Pancreas (tissue), 10 donors: ENCODE measurements at regions of chr19 and their contacts with region 1.

Region 1: GRCh38 chr19:38618590-38619360 is at the start of gene EIF3K:
- DNase-seq: peak; percentile 97 to 100 (median 99)
- ATAC-seq: peak; percentile 94 to 99 (median 97)
- H3K4me3 ChIP-seq: peak within 1 kb of the TSS; percentile 53 to 94 (median 66)
- H3K27ac ChIP-seq: peak within 1 kb of the TSS; percentile 27 to 60 (median 44)
- H3K4me1 ChIP-seq: peaks cover 6 to 10% (median 7%) of the 10 kb centered on the region in 3 donors
- H3K27me3 ChIP-seq: no peaks in the 10 kb centered on the region
- CTCF ChIP-seq: no peak
- total RNA-seq, gene EIF3K: 93.5 to 140 (median 131) TPM

Region 2: DNA sequence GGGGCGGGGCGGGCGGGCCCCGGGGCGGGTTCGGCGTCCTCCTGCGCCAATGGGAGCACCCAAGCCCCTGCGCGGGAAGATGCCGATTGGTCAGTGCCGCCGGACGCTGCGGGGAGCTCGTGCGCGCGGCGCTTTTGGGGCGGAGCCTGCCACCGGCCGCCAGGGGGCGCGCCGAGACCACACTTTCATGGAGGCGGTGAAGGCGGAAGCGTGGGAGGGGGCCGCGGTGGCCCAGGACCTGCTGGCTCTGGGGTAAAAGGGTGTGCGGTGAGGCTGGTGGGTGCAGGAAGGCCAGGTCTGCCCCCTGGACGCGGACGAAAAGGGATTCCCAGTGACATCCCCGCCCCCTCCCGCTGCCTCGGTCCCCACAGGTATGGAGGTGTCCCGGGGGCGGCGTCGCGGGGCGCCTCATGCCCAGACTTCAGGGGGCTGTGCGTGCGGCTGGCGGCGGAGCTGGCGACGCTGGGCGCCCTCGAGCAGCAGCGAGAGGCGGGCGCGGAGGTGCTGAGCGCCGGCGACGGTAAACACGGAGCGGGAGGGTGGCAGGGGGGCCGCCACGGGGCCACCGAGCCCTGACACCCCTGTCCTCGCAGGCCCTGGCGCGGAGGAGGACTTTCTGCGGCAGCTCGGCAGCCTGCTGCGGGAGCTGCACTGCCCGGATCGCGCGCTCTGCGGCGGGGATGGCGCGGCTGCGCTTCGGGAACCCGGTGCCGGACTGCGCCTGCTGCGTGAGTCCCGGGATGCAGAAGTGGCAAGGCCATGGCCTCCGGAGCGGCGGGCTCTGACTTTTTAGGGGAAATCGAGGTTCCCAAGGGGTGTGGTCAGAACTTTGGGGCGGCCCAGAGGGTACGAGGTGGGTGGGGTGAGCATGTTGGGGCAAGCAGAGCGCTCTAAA is 215.6 kb before region 1 on chr19 and contains the start of gene FAM98C:
- intact Hi-C with region 1: loop called in 1 of 3 experiments (anchors 10 kb)
- DNase-seq: peak; percentile 95 to 99 (median 98)
- ATAC-seq: peak; percentile 98 to 99 (median 98)
- H3K4me3 ChIP-seq: peak within 1 kb of the TSS; percentile 81 to 99 (median 90)
- H3K27ac ChIP-seq: peak within 1 kb of the TSS; percentile 78 to 85 (median 80)
- H3K4me1 ChIP-seq: peaks cover 0 to 2% (median 0%) of the 10 kb centered on the region in 3 donors
- H3K27me3 ChIP-seq: no peaks in the 10 kb centered on the region
- CTCF ChIP-seq: peak; percentile 98 to 99 (median 99)
- total RNA-seq, gene FAM98C: 11.3 to 18.9 (median 15.5) TPM

Region 3: GRCh38 chr19:38514812-38515633 is 103.8 kb before region 1 on chr19:
- intact Hi-C with region 1: loop called in 1 of 3 experiments (anchors 10 kb)
- DNase-seq: peak; percentile 52 to 90 (median 76)
- ATAC-seq: peak; percentile 88 to 99 (median 95)
- H3K4me3 ChIP-seq: no peak overlapping the region
- H3K27ac ChIP-seq: no peak overlapping the region
- H3K4me1 ChIP-seq: no peaks in the 10 kb centered on the region
- H3K27me3 ChIP-seq: no peaks in the 10 kb centered on the region
- CTCF ChIP-seq: peak; percentile 77 to 85 (median 82)